CD4-positive, alpha-beta T cell (primary cell): ENCODE measurements at regions of chr1 and their contacts with region 1.

Region 1: DNA sequence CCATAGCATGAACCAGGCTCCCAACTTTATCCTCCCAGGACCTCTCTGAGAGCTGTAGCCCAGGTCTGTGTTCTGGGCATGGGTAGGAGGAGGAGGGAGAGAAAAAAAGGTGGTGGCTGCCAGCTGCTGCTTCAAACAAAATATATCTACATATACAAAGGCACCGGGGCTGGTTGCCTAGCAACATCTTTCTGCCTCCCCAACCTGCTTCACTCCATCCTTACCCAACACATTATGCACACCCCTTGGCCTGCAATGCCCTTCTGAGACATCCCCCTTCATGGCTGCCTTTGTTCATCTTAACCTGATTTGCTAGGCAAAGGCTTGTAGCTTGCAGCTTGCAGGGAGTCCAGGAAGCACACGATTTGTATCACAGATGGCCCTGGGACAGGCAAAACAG is 27.2 kb upstream of the ATP1A1 start:
- DNase-seq: peak; percentile 34 to 91 (median 59)
- ATAC-seq: peak; percentile 91
- H3K4me3 ChIP-seq: no peak overlapping the region
- H3K4me3 Mint-ChIP-seq: peak overlapping the region; percentile 18
- H3K27ac ChIP-seq: peak overlapping the region; percentile 33 to 49
- H3K27ac Mint-ChIP-seq: peak overlapping the region; percentile 87
- H3K4me1 ChIP-seq: peaks cover 56% of the 10 kb centered on the region
- H3K4me1 Mint-ChIP-seq: peaks cover 82% of the 10 kb centered on the region
- H3K27me3 ChIP-seq: no peaks in the 10 kb centered on the region
- H3K27me3 Mint-ChIP-seq: no peaks in the 10 kb centered on the region
- CTCF ChIP-seq: no peak

Region 2: GRCh38 chr1:116325922-116326321 is 19.9 kb before region 1 on chr1:
- CTCF ChIA-PET with region 1: interaction called, 3 read pairs
- POLR2A ChIA-PET with region 1: interaction called, 7 read pairs
- intact Hi-C with region 1: loop called in 1 of 2 experiments (anchors 2 kb)
- DNase-seq: peak; percentile 25 to 83 (median 53)
- ATAC-seq: peak; percentile 91
- H3K4me3 ChIP-seq: peak overlapping the region; percentile 22
- H3K4me3 Mint-ChIP-seq: peak overlapping the region; percentile 62
- H3K27ac ChIP-seq: peak overlapping the region; percentile 72 to 85
- H3K27ac Mint-ChIP-seq: peak overlapping the region; percentile 91
- H3K4me1 ChIP-seq: peaks cover 60% of the 10 kb centered on the region
- H3K4me1 Mint-ChIP-seq: peaks cover 98% of the 10 kb centered on the region
- H3K27me3 ChIP-seq: no peaks in the 10 kb centered on the region
- H3K27me3 Mint-ChIP-seq: no peaks in the 10 kb centered on the region
- CTCF ChIP-seq: no peak

Region 3: DNA sequence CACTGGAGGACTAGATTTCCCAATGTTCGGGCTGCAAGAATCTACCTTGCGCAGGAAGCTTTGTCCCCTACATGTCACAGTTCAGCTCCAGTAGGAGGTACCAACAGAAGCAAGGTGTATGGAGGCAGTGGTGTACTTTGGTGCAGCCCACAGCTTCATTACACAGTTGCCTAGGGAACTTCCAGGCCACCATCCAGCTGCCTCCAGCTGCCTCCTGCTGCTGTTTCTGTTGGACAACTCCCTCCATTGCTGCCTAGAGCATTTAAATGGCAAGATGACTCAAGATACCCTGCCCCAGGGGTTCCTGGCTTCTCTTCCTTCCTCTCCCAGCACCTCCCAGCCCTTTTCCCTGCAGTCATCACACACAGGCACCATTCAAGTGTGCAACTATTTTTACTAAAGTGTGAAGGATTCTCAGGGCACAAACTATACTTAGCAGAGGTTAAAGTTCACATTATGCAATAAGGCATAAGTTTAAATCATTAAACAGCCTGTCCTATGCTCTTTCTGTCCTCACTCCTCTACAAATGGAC is 11.8 kb before region 1 on chr1:
- CTCF ChIA-PET with region 1: no interaction called
- POLR2A ChIA-PET with region 1: interaction called, 4 read pairs
- intact Hi-C with region 1: loop called in 1 of 2 experiments (anchors 1 kb)
- DNase-seq: no peak
- ATAC-seq: no peak
- H3K4me3 ChIP-seq: no peak overlapping the region
- H3K4me3 Mint-ChIP-seq: no peak overlapping the region
- H3K27ac ChIP-seq: no peak overlapping the region
- H3K27ac Mint-ChIP-seq: no peak overlapping the region
- H3K4me1 ChIP-seq: peaks cover 17% of the 10 kb centered on the region
- H3K4me1 Mint-ChIP-seq: peaks cover 77% of the 10 kb centered on the region
- H3K27me3 ChIP-seq: no peaks in the 10 kb centered on the region
- H3K27me3 Mint-ChIP-seq: no peaks in the 10 kb centered on the region
- CTCF ChIP-seq: no peak

Region 4: DNA sequence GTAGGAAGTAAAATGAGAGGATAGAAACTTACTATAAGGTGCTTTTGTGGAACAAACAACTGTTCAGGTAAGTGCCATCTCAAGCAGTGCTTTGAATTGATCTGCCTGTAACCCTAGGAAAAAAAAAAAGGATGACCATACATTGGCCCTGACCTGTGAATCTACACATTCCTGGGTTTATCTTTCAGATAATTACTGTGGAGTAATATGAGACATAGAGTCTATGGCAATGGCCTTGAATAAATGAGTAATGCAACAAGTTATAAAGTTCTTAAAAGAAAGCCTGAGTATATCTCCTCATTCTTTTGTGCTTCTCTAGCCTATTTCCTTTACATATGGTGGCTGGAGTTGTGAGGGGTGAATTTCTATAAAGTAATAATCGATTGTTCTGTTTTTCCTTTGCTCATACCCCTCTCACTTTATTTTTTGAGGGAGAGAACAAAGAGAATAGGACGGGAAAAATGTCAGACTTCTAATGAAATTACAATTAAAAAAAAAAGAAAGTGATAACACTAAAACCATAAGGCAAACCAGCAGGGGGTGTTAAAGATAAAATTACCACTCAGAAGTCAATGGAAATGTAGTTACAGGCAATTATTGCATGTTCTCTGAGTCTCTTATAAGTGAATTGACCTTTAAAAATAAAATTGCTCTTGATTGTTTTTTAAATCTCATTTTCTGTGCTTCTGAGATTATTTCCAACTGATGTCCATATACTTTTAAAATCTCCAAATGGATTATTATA is 14.8 kb after region 1 on chr1:
- CTCF ChIA-PET with region 1: no interaction called
- POLR2A ChIA-PET with region 1: interaction called, 4 read pairs
- intact Hi-C with region 1: loop called in 1 of 2 experiments (anchors 1 kb)
- DNase-seq: peak in 3 of 14 experiments; percentile 55 to 62 (median 57)
- ATAC-seq: no peak
- H3K4me3 ChIP-seq: no peak overlapping the region
- H3K4me3 Mint-ChIP-seq: no peak overlapping the region
- H3K27ac ChIP-seq: no peak overlapping the region
- H3K27ac Mint-ChIP-seq: no peak overlapping the region
- H3K4me1 ChIP-seq: no peaks in the 10 kb centered on the region
- H3K4me1 Mint-ChIP-seq: peaks cover 44% of the 10 kb centered on the region
- H3K27me3 ChIP-seq: no peaks in the 10 kb centered on the region
- H3K27me3 Mint-ChIP-seq: no peaks in the 10 kb centered on the region
- CTCF ChIP-seq: peak; percentile 38